IMR-90 (cell line): ENCODE measurements at regions of chr2 and their contacts with region 1.

Region 1: GRCh38 chr2:42286268-42286946 is 74.6 kb downstream of the COX7A2L start:
- DNase-seq: peak; percentile 62
- ATAC-seq: peak; percentile 21; the same call in 1 of the 2 replicates
- H3K4me3 ChIP-seq: no peak overlapping the region
- H3K27ac ChIP-seq: no peak overlapping the region
- H3K4me1 ChIP-seq: peaks cover 4% of the 10 kb centered on the region
- H3K27me3 ChIP-seq: no peaks in the 10 kb centered on the region
- CTCF ChIP-seq: no peak
- POLR2A ChIP-seq: no peak
- RAD21 ChIP-seq: no peak

Region 2: GRCh38 chr2:42249887-42250286 is 36.5 kb before region 1 on chr2:
- CTCF ChIA-PET with region 1: no interaction called
- POLR2A ChIA-PET with region 1: no interaction called
- dilution Hi-C with region 1: no loop called
- in situ Hi-C with region 1: no loop called
- intact Hi-C with region 1: loop called (anchors 5 kb)
- DNase-seq: no peak
- ATAC-seq: no peak
- H3K4me3 ChIP-seq: no peak overlapping the region
- H3K27ac ChIP-seq: no peak overlapping the region
- H3K4me1 ChIP-seq: no peaks in the 10 kb centered on the region
- H3K27me3 ChIP-seq: no peaks in the 10 kb centered on the region
- CTCF ChIP-seq: no peak
- POLR2A ChIP-seq: no peak
- RAD21 ChIP-seq: no peak